ENCODE measurements at regions of chr10 and their contacts with region 1.

Region 1: DNA sequence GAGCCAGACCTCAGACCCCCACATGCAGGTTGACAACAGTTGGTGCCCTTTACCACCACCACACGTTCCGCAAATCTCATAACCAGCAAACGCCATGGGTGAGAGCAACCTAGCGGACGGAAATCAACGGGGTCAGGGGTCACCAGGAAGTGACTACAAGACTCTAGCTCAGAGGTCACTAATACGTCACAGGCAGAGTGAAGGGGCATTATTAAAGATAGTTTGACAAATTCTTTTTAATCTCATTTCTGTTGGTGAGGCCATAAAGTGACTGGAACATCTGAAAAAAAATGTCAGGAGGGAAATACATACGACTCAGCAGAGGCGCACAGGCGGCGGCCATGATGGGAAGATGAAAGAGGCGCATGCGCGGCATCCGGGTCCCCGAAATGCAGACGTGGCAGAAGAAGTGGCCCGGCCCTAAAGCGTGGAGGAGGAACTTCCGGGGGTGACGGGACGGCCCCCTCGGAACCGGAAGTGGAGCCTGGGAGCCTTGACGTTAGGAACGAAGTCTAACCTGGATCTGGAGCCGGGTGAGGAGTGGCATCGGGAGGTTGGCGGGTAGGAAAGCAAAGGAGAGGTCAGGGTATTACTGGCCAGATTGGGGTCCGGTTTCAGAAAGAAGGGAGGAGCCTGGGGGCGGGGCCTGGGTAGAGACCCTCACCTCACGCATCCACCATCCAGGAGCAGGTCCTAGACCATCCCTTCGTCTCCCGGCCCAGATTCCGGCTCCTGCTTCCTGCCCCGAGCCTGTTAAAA is at the start of gene SEC24C:
- DNase-seq: peak; percentile 94 to 97 (median 96)
- H3K4me3 ChIP-seq: peak within 1 kb of the TSS; percentile 93 to 99 (median 96)
- H3K27ac ChIP-seq: peak within 1 kb of the TSS; percentile 93 to 98
- H3K4me1 ChIP-seq: peaks cover 11 to 23% (median 15%) of the 10 kb centered on the region in 4 experiments
- H3K27me3 ChIP-seq: no peaks in the 10 kb centered on the region

Region 2: DNA sequence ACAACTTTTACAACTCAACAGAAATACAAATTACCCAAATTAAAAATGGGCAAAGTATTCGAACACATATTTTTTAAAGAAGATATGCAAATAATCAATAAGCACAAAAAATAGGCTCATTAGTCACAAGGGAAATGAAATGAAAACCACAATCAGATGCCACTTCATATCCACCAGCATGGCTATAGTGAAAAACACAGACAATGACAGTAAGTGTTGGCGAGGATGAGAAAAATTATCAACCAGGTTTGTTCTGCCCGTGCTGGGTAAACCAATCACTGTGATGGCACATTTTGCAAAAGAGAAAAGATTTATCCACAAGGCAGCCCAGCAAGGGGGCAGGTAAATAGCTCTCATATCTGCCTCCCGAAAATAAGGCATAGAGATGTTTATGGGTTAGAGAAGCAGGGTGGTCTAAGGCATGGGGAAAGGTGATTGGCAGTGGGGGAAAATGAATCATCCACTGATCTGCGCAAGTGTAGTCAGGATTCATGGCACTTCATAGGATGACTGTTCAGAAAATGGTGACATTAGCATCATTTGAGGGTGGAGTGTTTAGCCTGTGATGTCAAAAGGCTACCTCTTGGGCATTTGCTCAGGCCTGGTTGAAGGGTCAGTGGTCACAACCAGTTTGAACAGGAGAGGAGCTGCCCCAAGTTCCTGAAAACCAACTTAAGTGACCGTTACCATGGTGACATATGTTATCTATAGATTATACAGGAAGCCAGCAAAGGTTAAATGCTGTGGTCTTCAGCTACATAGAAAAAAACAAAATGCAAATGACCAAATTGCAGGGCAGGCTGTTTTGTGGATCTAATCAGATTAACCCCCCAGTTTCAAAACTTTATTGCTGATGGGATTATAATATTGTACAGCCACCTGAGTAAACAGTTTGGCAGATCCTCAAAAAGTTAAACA is 377.4 kb before region 1 on chr10:
- CTCF ChIA-PET with region 1: no interaction called
- POLR2A ChIA-PET with region 1: no interaction called
- DNase-seq: peak in 2 of 3 donors; percentile 16 to 17
- H3K4me3 ChIP-seq: no peak overlapping the region
- H3K27ac ChIP-seq: peak overlapping the region in 1 of 2 experiments; percentile 44
- H3K4me1 ChIP-seq: no peaks in the 10 kb centered on the region
- H3K27me3 ChIP-seq: no peaks in the 10 kb centered on the region

Region 3: GRCh38 chr10:73730153-73730906 is 13.8 kb before region 1 on chr10:
- CTCF ChIA-PET with region 1: interaction called, 9 read pairs
- POLR2A ChIA-PET with region 1: interaction called, 16 read pairs
- DNase-seq: peak; percentile 89 to 95 (median 94)
- H3K4me3 ChIP-seq: peak overlapping the region; percentile 87 to 97 (median 95)
- H3K27ac ChIP-seq: peak overlapping the region; percentile 85 to 88
- H3K4me1 ChIP-seq: peaks cover 4 to 13% (median 8%) of the 10 kb centered on the region in 4 experiments
- H3K27me3 ChIP-seq: no peaks in the 10 kb centered on the region

Region 4: GRCh38 chr10:73772280-73773151 is 28.4 kb after region 1 on chr10:
- CTCF ChIA-PET with region 1: interaction called, 10 read pairs
- POLR2A ChIA-PET with region 1: interaction called, 6 read pairs
- DNase-seq: peak; percentile 76 to 88 (median 80)
- H3K4me3 ChIP-seq: peak overlapping the region; percentile 77 to 98 (median 93)
- H3K27ac ChIP-seq: peak overlapping the region; percentile 58 to 90
- H3K4me1 ChIP-seq: peaks cover 10 to 40% (median 31%) of the 10 kb centered on the region in 4 experiments
- H3K27me3 ChIP-seq: no peaks in the 10 kb centered on the region